OCI-LY7 (cell line): ENCODE measurements at regions of chr21 and their contacts with region 1.

Region 1: DNA sequence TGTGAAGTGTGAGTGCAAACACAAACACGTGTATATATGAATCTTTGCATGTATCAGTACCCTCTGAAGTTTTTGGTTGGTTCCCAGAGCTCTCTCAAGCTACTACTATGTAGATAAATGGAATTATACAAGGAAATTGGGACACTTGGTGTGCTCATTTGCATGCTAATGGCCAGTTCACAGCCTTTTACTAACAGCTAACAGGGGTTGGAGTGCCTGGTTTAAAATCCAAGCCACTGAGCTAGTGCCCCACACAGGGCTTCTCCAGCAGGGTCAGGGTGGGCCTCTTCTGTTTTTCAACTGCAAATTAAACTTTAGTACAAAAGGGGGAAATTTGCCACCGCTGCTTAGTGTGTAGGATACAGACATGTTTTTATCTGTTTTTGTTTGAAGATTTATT is 121.0 kb downstream of the ATP5PO start:
- DNase-seq: no peak
- H3K4me3 ChIP-seq: no peak overlapping the region
- H3K27ac ChIP-seq: no peak overlapping the region
- H3K4me1 ChIP-seq: no peaks in the 10 kb centered on the region
- CTCF ChIP-seq: no peak

Region 2: GRCh38 chr21:33828083-33828482 is 33.5 kb after region 1 on chr21:
- CTCF ChIA-PET with region 1: no interaction called
- POLR2A ChIA-PET with region 1: no interaction called
- intact Hi-C with region 1: loop called (anchors 2 kb)
- DNase-seq: no peak
- H3K4me3 ChIP-seq: no peak overlapping the region
- H3K27ac ChIP-seq: no peak overlapping the region
- H3K4me1 ChIP-seq: peaks cover 3% of the 10 kb centered on the region
- CTCF ChIP-seq: no peak

Region 3: GRCh38 chr21:33866826-33867225 is 72.2 kb after region 1 on chr21:
- CTCF ChIA-PET with region 1: no interaction called
- POLR2A ChIA-PET with region 1: no interaction called
- intact Hi-C with region 1: no loop called
- DNase-seq: no peak
- H3K4me3 ChIP-seq: no peak overlapping the region
- H3K27ac ChIP-seq: no peak overlapping the region
- H3K4me1 ChIP-seq: no peaks in the 10 kb centered on the region
- CTCF ChIP-seq: no peak